OCI-LY7 (cell line): ENCODE measurements at regions of chr1 and their contacts with region 1.

Region 1: DNA sequence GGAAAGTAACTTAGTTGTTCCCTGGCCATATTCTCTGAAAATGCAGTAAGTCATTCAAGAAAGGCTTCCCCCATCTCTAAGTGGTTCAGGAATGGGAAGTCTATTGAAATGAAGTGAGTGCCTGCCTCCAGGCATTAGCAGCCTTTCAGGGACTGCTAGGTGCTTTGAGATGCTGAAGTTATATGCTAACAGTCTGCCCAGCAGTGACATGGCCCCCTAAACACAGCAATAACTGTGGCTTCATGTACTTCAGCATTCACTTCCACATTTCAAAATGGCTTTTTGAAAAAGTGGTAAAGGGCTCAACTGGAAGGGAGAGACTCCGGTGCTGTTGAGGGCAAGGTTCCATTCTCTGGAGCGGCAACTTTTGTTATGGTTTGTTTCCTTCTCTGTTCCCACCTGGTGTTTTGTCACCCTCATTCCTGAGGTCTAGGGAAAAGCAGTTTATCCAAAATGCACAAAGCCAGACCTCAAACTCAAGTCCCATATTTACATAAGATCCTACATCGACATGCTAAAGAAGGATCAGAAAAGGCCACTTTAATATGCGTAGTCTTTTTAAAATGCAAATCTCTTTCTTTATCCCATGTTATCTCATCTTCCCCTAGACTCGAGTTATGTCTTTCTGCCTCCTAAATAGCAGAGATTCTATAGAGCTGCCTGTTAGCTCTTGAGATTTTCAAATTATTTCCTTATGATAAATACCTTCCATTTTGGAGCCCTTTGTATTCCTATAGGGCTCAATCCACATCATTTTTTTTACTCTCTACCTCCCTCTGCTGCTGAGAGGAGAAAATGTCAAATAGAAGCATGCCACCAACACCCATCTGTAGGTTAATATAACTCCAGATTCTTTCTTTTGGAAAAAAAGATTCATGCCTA is 34.2 kb upstream of the LRRC8C start:
- DNase-seq: peak; percentile 50
- H3K4me3 ChIP-seq: no peak overlapping the region
- H3K27ac ChIP-seq: no peak overlapping the region
- H3K4me1 ChIP-seq: no peaks in the 10 kb centered on the region
- CTCF ChIP-seq: peak; percentile 89

Region 2: GRCh38 chr1:89681045-89681729 is 82.5 kb after region 1 on chr1:
- CTCF ChIA-PET with region 1: no interaction called
- POLR2A ChIA-PET with region 1: no interaction called
- intact Hi-C with region 1: no loop called
- DNase-seq: peak; percentile 54
- H3K4me3 ChIP-seq: no peak overlapping the region
- H3K27ac ChIP-seq: peak overlapping the region; percentile 51
- H3K4me1 ChIP-seq: peaks cover 14% of the 10 kb centered on the region
- CTCF ChIP-seq: no peak

Region 3: GRCh38 chr1:89762779-89763648 is 164.3 kb after region 1 on chr1:
- CTCF ChIA-PET with region 1: interaction called, 3 read pairs
- POLR2A ChIA-PET with region 1: no interaction called
- intact Hi-C with region 1: loop called (anchors 1 kb)
- DNase-seq: peak; percentile 87
- H3K4me3 ChIP-seq: peak overlapping the region; percentile 37
- H3K27ac ChIP-seq: no peak overlapping the region
- H3K4me1 ChIP-seq: peaks cover 16% of the 10 kb centered on the region
- CTCF ChIP-seq: peak; percentile 96

Region 4: DNA sequence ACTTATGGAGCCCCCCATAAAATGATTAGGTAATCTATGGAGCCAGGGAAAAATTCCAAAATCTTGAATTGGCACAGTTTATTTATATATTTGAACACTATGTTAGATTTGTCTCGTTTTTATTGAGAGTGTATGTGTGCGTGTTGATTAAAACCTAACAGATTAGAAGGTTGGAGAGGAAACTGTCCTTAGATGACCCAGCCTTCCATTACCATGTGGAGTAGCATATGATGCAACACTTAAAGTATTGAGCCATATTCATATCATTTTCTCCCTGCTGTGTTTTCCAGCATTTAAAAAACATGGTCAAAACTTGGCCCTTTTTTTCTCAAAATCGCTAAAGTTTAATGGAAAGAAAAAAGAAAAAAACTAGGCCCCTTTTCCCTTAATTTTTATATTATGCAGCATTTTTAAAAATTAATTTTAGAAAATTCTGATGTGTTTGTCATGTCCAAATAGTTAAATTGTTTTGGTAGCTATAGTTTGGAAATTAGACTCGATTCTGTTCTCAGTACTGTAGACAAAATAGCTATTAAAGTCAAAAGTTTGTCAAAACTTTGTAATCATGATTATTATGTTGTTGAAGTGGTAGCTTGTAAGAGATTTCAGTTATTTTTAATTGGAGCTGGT is 224.4 kb after region 1 on chr1:
- CTCF ChIA-PET with region 1: no interaction called
- POLR2A ChIA-PET with region 1: no interaction called
- intact Hi-C with region 1: no loop called
- DNase-seq: peak; percentile 37
- H3K4me3 ChIP-seq: peak overlapping the region; percentile 74
- H3K27ac ChIP-seq: peak overlapping the region; percentile 89
- H3K4me1 ChIP-seq: peaks cover 37% of the 10 kb centered on the region
- CTCF ChIP-seq: no peak

Region 5: DNA sequence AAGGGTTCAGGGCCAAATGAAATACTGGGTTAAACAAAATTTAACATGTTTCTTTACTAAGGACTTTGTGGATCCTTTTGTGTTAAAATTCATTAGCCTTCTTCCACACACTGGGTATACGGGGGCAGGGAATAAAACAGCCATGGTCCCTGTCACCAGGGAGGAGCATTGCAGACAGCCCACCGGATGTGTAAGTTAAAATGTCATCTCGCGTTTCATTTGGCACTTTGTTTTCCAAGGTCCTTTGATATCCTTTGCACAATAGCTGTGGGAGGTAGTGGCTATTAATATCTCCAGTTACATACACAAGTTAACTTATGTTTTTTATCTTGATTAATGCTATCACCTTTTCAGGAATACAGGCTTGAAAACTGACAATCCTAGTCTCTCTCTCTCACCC is 945.7 kb after region 1 on chr1:
- CTCF ChIA-PET with region 1: no interaction called
- POLR2A ChIA-PET with region 1: no interaction called
- intact Hi-C with region 1: no loop called
- DNase-seq: no peak
- H3K4me3 ChIP-seq: no peak overlapping the region
- H3K27ac ChIP-seq: no peak overlapping the region
- H3K4me1 ChIP-seq: no peaks in the 10 kb centered on the region
- CTCF ChIP-seq: no peak